Breast epithelium (tissue), 4 donors: ENCODE measurements at regions of chr17 and their contacts with region 1.

Region 1: DNA sequence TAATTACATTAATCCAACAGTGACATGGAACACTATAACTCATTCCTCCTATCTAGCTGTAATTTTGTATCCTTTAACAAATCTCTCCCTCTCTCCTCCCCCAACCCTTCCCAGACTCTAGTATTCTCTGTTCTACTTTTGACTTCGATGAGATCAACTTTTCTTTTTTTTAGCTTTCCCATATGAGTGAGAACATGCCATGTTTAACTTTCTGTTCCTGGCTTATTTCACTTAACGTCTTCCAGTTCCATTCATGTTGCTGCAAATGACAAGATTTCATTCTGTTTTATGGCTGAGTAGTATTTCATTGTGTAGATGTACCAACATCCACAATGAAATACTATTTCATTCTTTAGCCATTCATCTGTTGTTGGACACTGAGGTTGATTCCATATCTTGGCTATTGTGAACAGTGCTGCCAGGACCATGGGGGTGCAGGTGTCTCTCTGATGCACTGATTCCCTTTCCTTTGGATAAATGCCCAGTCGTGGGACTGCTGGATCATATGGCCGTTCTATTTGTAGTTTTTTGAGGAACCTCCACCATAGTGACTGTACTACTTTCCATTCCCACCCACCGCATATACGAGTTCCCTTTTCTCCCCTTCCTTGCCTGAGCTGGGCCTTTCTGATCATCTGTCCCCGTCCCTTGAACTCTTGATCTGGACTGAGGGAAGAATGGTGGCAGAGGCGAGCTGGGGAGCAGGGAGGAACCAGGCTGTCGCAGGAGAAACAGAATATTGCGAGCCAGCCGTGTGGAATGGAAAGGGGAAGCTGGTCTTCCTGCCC is 7.7 kb upstream of the CEP295NL start:
- DNase-seq: no peak
- H3K4me3 ChIP-seq: no peak overlapping the region
- H3K27ac ChIP-seq: peak overlapping the region in 1 of 2 donors; percentile 21
- H3K4me1 ChIP-seq: no peaks in the 10 kb centered on the region
- H3K27me3 ChIP-seq: no peaks in the 10 kb centered on the region
- CTCF ChIP-seq: no peak
- POLR2A ChIP-seq: no peak

Region 2: DNA sequence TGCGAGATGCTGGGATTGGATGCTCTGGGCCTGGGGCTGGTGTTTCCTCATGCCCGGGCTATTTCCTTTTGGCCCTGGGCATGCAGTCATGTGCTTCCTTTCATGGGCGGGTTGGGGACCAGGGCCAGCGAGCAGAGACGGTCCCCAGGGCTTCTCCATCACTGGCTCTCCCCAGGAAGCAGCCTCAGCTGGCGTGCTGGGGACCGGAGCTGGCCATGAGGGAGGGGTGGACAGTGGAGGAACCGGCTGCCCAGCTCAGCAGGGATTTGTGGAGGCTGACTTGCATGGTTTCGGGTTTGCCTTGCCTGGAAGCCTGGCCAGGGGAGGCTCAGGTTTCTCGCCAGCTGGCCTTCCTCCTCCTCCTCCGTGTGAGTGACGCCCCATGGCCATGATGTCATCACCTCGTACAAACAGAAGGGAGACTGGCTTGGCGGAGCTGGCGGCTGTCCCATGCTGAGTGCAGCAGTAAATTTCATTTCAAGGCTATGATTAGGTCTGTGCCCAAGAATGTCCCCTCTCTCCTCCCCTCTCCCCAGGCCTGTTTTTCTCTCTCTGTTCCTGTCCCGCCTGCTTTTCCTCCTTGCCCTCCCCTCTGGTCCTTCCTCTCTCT is 23.4 kb after region 1 on chr17:
- intact Hi-C with region 1: loop called (anchors 1 kb)
- DNase-seq: peak; percentile 89 to 94
- H3K4me3 ChIP-seq: peak overlapping the region in 2 of 3 donors; percentile 35 to 60
- H3K27ac ChIP-seq: peak overlapping the region; percentile 70 to 95
- H3K4me1 ChIP-seq: peaks cover 0 to 15% of the 10 kb centered on the region in 2 donors
- H3K27me3 ChIP-seq: no peaks in the 10 kb centered on the region
- CTCF ChIP-seq: no peak
- POLR2A ChIP-seq: no peak

Region 3: GRCh38 chr17:80498242-80498919 is 1587.7 kb after region 1 on chr17:
- intact Hi-C with region 1: loop called (anchors 5 kb)
- DNase-seq: peak in 1 of 2 donors; percentile 55
- H3K4me3 ChIP-seq: peak overlapping the region in 2 of 3 donors; percentile 35 to 62
- H3K27ac ChIP-seq: peak overlapping the region; percentile 48 to 69
- H3K4me1 ChIP-seq: no peaks in the 10 kb centered on the region
- H3K27me3 ChIP-seq: peaks cover 0 to 3% of the 10 kb centered on the region in 2 donors
- CTCF ChIP-seq: no peak
- POLR2A ChIP-seq: no peak